Activated CD4-positive, alpha-beta memory T cell treated with anti-CD3 and anti-CD28 coated beads for 36 hours (primary cell): ENCODE measurements at regions of chr2 and their contacts with region 1.

Region 1: GRCh38 chr2:218360447-218360846 is 3.8 kb downstream of the CATIP start:
- DNase-seq: no peak
- H3K4me3 Mint-ChIP-seq: no peak overlapping the region
- H3K27ac Mint-ChIP-seq: no peak overlapping the region
- H3K4me1 Mint-ChIP-seq: no peaks in the 10 kb centered on the region
- H3K27me3 Mint-ChIP-seq: no peaks in the 10 kb centered on the region

Region 2: DNA sequence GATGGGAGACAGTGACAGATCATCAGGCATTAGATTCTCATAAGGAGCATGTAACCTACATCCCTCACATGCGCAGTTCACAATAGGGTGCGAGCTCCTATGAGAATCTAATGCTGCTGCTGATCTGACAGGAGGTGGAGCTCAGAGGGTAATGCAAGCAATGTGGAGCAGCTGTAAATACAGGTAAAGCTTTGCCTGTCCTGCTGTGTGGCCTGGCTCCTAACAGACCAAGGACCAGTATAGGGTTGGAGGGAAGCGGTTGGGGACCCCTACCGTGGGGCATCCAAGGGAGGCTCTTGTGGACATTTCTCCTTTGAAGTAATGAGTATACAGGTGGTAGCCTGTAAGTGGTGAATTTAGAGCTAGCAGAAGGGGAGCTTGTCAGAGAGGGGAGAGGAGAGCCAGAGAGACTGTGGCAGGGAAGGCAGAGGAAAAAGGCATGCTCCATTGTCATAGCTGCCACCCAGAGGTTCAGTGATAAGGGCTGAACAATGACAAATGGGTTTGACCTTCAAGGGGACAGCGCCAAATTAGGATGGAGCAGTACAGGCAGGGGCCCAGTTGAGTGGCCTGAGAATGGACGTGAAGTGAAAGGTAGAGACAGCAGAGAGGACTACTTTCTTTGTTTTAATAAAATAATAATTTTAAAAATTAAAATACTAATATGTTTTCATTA is 52.9 kb before region 1 on chr2:
- CTCF ChIA-PET with region 1: interaction called, 59 read pairs
- POLR2A ChIA-PET with region 1: no interaction called
- intact Hi-C with region 1: no loop called
- DNase-seq: no peak
- H3K4me3 Mint-ChIP-seq: no peak overlapping the region
- H3K27ac Mint-ChIP-seq: no peak overlapping the region
- H3K4me1 Mint-ChIP-seq: no peaks in the 10 kb centered on the region
- H3K27me3 Mint-ChIP-seq: no peaks in the 10 kb centered on the region

Region 3: DNA sequence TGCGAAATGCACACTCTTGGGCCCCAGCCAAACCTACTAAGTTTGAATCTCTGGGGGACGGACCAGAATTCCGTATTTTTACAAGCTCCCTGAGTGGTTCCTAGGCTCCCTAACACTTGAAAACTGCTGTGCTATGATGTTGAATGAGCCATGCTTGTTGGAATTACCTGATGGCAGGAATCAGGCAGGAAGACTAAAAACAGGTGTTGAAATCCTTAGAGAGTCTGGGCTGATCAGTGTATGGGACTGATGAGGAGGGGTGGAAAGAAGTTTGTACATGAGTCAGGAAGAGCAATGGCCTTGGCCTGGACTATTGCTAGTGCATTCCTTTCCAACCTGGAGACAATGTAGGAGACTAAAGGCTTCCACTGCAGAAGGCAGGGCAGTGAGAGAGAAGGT is 43.2 kb before region 1 on chr2:
- CTCF ChIA-PET with region 1: interaction called, 10 read pairs
- POLR2A ChIA-PET with region 1: interaction called, 3 read pairs
- intact Hi-C with region 1: no loop called
- DNase-seq: no peak
- H3K4me3 Mint-ChIP-seq: no peak overlapping the region
- H3K27ac Mint-ChIP-seq: peak overlapping the region; percentile 84
- H3K4me1 Mint-ChIP-seq: peaks cover 27% of the 10 kb centered on the region
- H3K27me3 Mint-ChIP-seq: no peaks in the 10 kb centered on the region

Region 4: DNA sequence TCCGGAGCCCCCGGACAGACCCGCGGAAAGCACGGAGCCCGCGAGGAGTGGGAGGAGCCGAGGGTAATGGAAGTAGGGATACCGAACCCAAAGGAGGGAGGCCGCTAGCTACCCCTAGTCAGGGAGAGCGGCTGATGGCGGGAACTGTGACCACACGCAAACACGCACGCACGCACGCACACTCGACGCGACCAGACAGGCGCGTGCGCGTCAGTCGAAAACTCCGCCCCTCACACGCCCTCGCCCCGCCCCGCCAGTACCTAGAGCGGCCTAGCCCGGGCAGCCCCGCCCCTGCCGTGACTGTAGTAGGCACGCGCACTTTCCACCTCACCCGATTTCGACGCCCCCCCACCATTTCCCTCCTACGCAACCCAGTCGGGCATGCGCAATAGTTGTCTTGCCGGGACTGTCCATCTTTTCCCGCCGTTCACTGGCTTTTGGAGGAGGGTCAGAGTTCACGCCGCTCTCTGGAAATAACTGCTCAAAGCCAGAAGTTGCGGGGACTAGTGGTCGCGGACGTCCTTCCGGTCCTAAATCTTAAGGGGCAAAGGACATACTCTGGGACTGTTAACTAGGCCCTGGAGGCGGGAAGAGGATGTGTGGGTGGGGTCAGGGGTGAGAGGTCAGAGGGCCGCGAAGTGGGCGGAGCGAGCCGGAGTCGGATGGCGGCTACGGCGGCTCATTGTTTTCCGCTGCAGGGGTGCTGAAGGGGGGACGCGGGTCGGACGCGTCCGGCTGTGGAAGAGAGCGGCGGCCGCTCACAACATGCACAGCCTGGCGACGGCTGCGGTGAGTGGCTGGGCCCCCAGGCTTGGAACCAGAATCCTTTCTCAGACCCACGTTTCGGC is 208.0 kb after region 1 on chr2 and contains the starts of genes CNOT9 and USP37:
- CTCF ChIA-PET with region 1: no interaction called
- POLR2A ChIA-PET with region 1: no interaction called
- intact Hi-C with region 1: no loop called
- DNase-seq: peak; percentile 100
- H3K4me3 Mint-ChIP-seq: peak within 1 kb of the TSS; percentile 96
- H3K27ac Mint-ChIP-seq: peak within 1 kb of the TSS; percentile 100
- H3K4me1 Mint-ChIP-seq: peaks cover 54% of the 10 kb centered on the region
- H3K27me3 Mint-ChIP-seq: no peaks in the 10 kb centered on the region
- total RNA-seq, gene CNOT9: 84.7 to 87.3 TPM
- total RNA-seq, gene USP37: 27.2 to 28.7 TPM